ENCODE measurements at regions of chr3 and their contacts with region 1.

Region 1: GRCh38 chr3:30693470-30694120 is 87.2 kb downstream of the TGFBR2 start:
- DNase-seq: peak; percentile 16
- ATAC-seq: peak; percentile 98
- H3K4me3 ChIP-seq: no peak overlapping the region
- H3K27ac ChIP-seq: no peak overlapping the region
- H3K4me1 ChIP-seq: no peaks in the 10 kb centered on the region
- H3K27me3 ChIP-seq: no peaks in the 10 kb centered on the region; a peak in 1 of 4 replicates
- CTCF ChIP-seq: peak; percentile 72 to 84 (median 79)
- EP300 ChIP-seq: no peak
- POLR2A ChIP-seq: no peak
- RAD21 ChIP-seq: peak; percentile 98

Region 2: DNA sequence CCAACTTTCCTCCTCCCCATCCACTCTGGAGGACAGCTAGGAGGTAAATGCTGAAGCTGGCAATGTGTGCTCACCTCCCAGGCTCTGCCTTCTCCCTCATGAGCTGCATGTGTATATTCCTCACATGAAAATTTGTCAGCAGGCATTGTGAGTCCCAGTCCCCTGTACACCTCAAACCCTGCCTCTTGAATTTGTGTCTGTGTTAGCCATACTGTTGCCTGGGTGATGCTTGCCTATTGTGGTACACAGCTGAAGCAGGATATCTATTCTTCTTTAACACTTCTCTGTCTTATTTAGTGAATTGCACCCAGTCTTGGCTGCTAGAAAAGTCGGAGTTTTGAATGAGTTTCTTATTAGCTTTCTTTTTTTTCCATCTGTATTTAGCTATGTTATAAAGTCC is 673.2 kb before region 1 on chr3:
- CTCF ChIA-PET with region 1: no interaction called
- POLR2A ChIA-PET with region 1: no interaction called
- RAD21 ChIA-PET with region 1: interaction called, 3 read pairs
- SMC1A ChIA-PET with region 1: no interaction called
- in situ Hi-C with region 1: loop called (anchors 10 kb)
- intact Hi-C with region 1: no loop called
- DNase-seq: no peak
- ATAC-seq: no peak
- H3K4me3 ChIP-seq: no peak overlapping the region
- H3K27ac ChIP-seq: no peak overlapping the region
- H3K4me1 ChIP-seq: no peaks in the 10 kb centered on the region
- H3K27me3 ChIP-seq: no peaks in the 10 kb centered on the region
- CTCF ChIP-seq: no peak
- EP300 ChIP-seq: no peak
- POLR2A ChIP-seq: no peak
- RAD21 ChIP-seq: no peak

Region 3: DNA sequence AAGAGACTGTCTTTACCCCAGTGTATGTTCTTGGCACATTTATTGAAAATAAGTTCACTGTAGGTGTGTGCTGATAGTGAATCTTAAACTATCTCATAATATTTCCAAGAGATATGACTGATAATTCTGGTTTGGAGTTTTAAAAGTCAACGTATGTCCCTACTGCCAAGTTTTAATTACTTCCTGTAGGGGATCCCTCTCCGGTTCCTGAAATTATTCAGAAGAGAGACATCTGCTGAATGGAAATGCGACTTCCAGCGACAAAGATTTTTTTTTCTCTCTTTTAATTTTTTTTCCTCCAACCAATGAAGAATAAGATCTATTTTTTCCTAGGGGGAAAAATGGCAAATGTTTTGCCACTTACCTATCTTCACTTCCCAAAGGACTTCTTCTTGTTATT is 586.1 kb before region 1 on chr3:
- CTCF ChIA-PET with region 1: interaction called, 11 read pairs
- POLR2A ChIA-PET with region 1: no interaction called
- RAD21 ChIA-PET with region 1: no interaction called
- SMC1A ChIA-PET with region 1: no interaction called
- in situ Hi-C with region 1: loop called (anchors 10 kb)
- intact Hi-C with region 1: no loop called
- DNase-seq: no peak
- ATAC-seq: no peak
- H3K4me3 ChIP-seq: no peak overlapping the region
- H3K27ac ChIP-seq: no peak overlapping the region
- H3K4me1 ChIP-seq: no peaks in the 10 kb centered on the region
- H3K27me3 ChIP-seq: no peaks in the 10 kb centered on the region
- CTCF ChIP-seq: no peak
- EP300 ChIP-seq: no peak
- POLR2A ChIP-seq: no peak
- RAD21 ChIP-seq: no peak

Region 4: DNA sequence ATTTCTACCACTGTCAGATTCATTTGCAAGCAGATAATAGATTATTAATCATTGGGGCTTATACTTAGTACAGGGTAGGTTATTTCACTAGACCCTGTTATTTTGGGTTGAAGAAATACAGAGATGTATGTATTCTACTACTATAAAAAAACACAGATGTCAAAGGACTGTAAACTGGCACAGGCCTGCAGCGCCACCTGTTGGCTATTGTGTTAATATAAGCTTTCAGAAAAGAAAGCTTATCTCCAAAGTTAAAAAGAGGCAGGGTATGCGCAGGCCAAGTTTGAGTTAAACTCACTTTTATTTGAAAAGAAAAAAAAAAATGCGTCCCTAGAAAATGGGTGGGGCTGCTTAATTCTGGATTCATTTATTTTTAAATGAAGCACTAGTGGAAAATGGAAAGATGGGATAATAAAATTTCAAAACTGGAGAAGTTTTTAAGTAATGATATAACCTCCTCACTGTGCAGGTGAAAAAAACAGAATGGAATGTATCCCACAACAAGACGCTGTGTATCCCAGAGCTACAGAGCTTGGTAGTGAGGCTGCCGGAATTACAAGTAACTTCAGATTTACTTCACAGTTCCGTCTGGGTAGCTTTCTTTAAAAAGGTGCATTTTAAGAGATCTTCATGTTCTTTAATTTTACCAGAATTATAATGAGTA is 494.4 kb before region 1 on chr3:
- CTCF ChIA-PET with region 1: interaction called, 40 read pairs
- POLR2A ChIA-PET with region 1: no interaction called
- RAD21 ChIA-PET with region 1: interaction called, 25 read pairs
- SMC1A ChIA-PET with region 1: interaction called, 28 read pairs
- in situ Hi-C with region 1: no loop called
- intact Hi-C with region 1: loop called (anchors 1 kb)
- DNase-seq: no peak
- ATAC-seq: peak; percentile 69
- H3K4me3 ChIP-seq: no peak overlapping the region
- H3K27ac ChIP-seq: no peak overlapping the region
- H3K4me1 ChIP-seq: no peaks in the 10 kb centered on the region
- H3K27me3 ChIP-seq: no peaks in the 10 kb centered on the region; a peak in 1 of 4 replicates
- CTCF ChIP-seq: peak; percentile 63 to 78 (median 67)
- EP300 ChIP-seq: no peak
- POLR2A ChIP-seq: no peak
- RAD21 ChIP-seq: peak; percentile 88

Region 5: GRCh38 chr3:30440147-30440604 is 253.4 kb before region 1 on chr3:
- CTCF ChIA-PET with region 1: interaction called, 4 read pairs
- POLR2A ChIA-PET with region 1: interaction called, 3 read pairs
- RAD21 ChIA-PET with region 1: interaction called, 3 read pairs
- SMC1A ChIA-PET with region 1: no interaction called
- in situ Hi-C with region 1: no loop called
- intact Hi-C with region 1: loop called (anchors 10 kb)
- DNase-seq: no peak
- ATAC-seq: no peak
- H3K4me3 ChIP-seq: no peak overlapping the region
- H3K27ac ChIP-seq: no peak overlapping the region
- H3K4me1 ChIP-seq: no peaks in the 10 kb centered on the region
- H3K27me3 ChIP-seq: no peaks in the 10 kb centered on the region
- CTCF ChIP-seq: no peak; a peak in 1 of 6 replicates
- EP300 ChIP-seq: no peak
- POLR2A ChIP-seq: no peak
- RAD21 ChIP-seq: peak; percentile 17; the same call in 1 of the 2 replicates

Region 6: GRCh38 chr3:30649572-30650318 is 43.9 kb before region 1 on chr3:
- CTCF ChIA-PET with region 1: no interaction called
- POLR2A ChIA-PET with region 1: no interaction called
- RAD21 ChIA-PET with region 1: no interaction called
- SMC1A ChIA-PET with region 1: no interaction called
- in situ Hi-C with region 1: no loop called
- intact Hi-C with region 1: no loop called
- DNase-seq: no peak
- ATAC-seq: peak; percentile 93
- H3K4me3 ChIP-seq: no peak overlapping the region
- H3K27ac ChIP-seq: no peak overlapping the region
- H3K4me1 ChIP-seq: peaks cover 14% of the 10 kb centered on the region
- H3K27me3 ChIP-seq: peaks cover 0 to 1% of the 10 kb centered on the region in 2 experiments; a peak in 1 of 4 replicates
- CTCF ChIP-seq: no peak
- EP300 ChIP-seq: peak; percentile 59 to 77; a peak in 3 of 4 replicates
- POLR2A ChIP-seq: no peak
- RAD21 ChIP-seq: 0 out of 2 replicates have a peak, but pooled peaks have one; percentile 3

Region 7: GRCh38 chr3:30680789-30681642 is 12.6 kb before region 1 on chr3:
- CTCF ChIA-PET with region 1: interaction called, 14 read pairs
- POLR2A ChIA-PET with region 1: interaction called, 5 read pairs
- RAD21 ChIA-PET with region 1: interaction called, 3 read pairs
- SMC1A ChIA-PET with region 1: interaction called, 4 read pairs
- in situ Hi-C with region 1: no loop called
- intact Hi-C with region 1: no loop called
- DNase-seq: no peak
- ATAC-seq: no peak
- H3K4me3 ChIP-seq: no peak overlapping the region
- H3K27ac ChIP-seq: no peak overlapping the region
- H3K4me1 ChIP-seq: no peaks in the 10 kb centered on the region; the same call in 1 of the 2 replicates
- H3K27me3 ChIP-seq: no peaks in the 10 kb centered on the region; a peak in 1 of 4 replicates
- CTCF ChIP-seq: no peak
- EP300 ChIP-seq: no peak
- POLR2A ChIP-seq: no peak
- RAD21 ChIP-seq: no peak